Left ventricle myocardium superior (tissue), 1 donor: ENCODE measurements at regions of chr6 and their contacts with region 1.

Region 1: DNA sequence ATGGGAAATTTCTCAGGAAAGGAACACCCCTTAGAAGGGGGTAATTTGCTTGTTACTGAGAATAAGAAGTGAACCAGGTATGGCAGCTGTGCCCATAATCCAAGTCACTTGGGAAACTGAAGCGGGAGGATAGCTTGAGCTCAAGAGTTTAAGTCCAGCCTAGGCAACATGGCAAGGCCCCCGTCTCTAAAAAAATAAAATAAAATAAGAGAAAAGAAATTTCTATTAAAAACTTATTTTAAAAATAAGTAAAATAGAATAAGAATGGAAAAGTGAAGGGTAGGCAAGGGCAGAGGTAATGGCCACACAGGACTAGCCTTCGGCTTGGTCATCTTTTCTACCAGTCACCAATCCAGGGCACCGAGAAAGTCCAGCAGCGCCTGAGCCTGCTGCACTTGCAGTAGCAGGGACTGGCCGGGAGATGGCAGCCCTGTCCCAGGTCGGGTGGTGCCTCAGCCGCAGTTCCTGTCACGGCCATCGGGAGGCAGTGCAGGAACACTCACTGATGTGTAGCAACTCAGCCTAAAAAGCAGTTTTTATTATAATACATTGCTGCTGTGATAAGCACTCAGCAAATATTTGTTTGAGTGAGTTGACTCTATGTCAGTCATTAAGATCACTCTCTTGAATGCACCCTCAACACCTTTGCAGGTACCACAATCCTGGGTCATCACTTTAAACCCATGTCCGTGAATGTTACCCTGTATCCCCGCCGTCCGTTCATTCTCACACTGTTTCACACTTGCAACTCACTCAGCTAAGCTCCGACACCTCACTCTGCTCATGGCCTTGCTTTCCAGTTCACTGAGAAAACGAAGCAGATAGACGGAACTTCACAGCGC is 23.2 kb upstream of the GCM1 start:
- DNase-seq: peak; percentile 93
- ATAC-seq: peak; percentile 94

Region 2: DNA sequence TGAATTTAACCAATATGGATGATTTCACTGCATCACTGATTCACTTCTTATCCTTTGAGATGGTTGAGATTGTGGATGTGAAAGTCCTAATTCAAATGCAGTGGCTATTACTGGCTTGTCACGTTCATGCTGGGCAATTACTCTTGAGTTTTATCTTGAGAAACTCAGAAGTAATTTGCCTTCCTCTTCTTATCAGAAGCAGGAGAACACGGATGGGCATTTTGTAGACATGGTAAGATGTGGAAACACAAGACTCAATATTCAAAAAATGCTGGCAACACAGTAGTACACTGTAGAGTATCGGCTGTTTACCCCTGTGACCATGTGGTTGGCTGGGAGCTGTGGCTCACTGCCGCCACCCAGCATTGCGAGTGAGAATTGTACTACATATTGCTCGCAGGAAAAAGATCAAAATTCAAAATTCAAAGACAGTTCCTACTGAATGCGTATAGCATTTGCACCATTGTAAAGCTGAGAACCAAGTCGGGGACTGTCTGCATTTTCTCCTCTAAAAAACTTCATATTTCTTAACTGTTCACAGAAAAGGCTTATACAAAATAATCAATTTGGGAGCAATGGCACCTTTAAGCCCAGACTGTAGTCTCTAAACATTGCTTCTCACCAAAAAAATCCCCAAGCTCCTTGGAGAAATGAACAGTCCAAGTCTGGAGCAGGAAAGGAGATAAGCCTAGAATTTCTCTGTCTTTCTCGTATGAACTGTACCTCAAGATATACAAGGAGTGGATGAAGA is 238.9 kb after region 1 on chr6:
- intact Hi-C with region 1: loop called (anchors 1 kb)
- DNase-seq: peak; percentile 67
- ATAC-seq: peak; percentile 89

Region 3: DNA sequence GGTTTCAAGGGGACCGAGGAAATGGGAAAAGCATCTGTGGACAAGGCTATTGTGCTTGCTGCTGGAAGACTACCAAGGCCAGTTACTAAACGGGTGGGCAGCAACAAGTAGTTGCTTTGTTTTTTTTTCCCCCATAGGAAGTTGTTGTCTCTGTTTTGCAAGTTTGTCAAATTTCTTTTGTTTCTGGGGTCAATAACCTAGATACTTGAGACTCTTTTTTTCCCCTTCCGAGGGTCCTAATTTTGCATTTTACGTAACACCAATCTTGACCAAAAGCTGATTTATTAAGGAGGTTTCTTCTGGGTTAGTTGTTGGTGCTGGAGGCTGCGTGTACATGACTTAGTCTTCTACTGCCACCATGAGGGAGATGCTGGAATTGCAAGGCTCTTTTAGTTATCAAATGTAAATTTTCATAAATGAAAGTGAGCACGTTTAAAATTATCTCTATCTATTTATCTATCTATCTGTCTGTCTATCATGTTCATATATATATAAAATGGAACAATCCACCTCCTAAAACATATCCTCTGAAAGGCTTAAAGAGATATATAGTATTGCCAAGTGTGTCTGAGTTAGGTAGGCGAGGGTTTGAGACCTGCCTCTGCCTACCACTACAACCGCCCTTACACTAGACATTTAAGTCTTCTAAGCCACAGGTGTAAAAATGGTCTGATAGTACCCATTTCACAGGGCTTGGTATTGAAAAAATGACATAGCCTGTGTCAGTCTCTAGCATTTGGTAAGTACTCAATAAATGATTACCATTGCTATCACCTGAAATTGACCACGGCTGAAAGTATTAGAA is 312.9 kb after region 1 on chr6:
- intact Hi-C with region 1: loop called (anchors 5 kb)
- DNase-seq: no peak
- ATAC-seq: peak; percentile 87

Region 4: DNA sequence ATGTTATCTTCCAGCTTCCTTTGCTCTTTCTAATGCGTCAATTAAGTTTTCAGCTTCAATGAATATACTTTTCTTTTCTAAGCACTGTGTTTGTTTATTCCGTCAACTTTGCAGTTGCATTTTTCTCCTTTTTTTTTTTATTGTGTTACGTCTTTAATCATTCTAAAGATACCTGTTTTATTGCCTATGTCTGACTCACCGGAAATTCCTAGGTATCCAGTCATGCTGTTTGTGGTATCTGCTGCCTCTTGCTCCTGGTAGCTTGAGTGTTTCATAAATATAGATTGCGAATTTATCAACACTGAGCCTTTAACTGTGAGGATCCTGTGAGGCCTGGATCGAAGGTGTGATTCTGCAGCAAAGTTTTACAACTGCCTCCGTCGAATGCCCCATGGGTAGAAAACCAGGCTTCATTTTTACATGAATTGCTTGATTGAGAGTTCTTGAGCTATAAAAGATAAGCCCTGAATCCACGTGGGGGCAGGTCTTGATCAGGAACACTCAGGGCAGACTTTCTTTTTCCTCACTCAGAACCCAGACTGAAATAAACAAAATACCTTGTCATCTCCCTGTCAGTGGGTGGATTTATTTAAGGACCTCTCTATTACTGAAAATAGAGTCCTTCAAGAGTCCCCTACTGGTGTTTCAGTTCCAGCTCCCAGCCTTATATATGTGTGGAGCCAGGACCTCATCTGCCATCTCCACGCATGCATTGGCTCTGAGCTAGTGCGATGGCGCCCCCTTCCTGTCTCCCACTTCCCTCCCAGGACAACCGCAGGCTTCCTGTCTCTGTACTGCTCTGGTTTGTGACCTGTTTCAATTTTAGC is 562.9 kb after region 1 on chr6:
- intact Hi-C with region 1: loop called (anchors 10 kb)
- DNase-seq: peak; percentile 51
- ATAC-seq: peak; percentile 77